Heart right ventricle (tissue), 16 donors: ENCODE measurements at regions of chr17 and their contacts with region 1.

Region 1: DNA sequence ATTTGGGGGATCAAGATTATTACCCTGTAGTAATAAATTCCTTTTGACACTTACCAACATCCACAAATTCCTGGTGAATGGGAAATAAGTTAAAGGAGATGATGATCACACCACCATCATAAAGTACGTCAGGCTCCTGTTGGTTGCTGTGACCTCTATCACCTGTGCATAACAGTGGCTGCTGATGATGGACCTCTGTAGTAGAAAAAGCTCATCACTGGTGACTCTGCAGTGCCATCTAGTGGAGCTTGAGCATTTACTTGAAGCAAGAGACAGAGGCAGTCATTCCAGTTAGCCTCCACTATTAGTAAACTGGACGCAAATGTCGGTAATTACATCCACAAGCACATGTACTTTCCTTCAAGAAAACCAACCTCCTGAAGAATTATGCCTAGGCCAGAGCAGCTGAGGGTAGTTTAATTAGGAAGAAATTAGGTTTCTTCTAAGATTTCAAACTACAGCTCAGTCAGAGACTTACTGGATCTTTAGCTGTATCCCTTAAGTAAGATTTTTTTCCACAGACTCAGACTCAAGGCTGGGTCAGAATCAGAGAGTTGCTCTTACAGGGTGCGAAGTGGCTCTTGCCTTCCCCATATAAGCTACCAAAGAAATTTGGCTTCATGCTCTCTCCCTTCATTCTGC is 39.3 kb downstream of the CYB561 start:
- DNase-seq: peak in 1 of 2 donors; percentile 85
- ATAC-seq: peak; percentile 78 to 90 (median 84)
- H3K4me3 ChIP-seq: no peak overlapping the region
- H3K27ac ChIP-seq: no peak overlapping the region
- H3K4me1 ChIP-seq: peaks cover 0 to 8% (median 0%) of the 10 kb centered on the region in 9 donors
- H3K27me3 ChIP-seq: no peaks in the 10 kb centered on the region
- CTCF ChIP-seq: peak; percentile 79 to 93 (median 88)

Region 2: DNA sequence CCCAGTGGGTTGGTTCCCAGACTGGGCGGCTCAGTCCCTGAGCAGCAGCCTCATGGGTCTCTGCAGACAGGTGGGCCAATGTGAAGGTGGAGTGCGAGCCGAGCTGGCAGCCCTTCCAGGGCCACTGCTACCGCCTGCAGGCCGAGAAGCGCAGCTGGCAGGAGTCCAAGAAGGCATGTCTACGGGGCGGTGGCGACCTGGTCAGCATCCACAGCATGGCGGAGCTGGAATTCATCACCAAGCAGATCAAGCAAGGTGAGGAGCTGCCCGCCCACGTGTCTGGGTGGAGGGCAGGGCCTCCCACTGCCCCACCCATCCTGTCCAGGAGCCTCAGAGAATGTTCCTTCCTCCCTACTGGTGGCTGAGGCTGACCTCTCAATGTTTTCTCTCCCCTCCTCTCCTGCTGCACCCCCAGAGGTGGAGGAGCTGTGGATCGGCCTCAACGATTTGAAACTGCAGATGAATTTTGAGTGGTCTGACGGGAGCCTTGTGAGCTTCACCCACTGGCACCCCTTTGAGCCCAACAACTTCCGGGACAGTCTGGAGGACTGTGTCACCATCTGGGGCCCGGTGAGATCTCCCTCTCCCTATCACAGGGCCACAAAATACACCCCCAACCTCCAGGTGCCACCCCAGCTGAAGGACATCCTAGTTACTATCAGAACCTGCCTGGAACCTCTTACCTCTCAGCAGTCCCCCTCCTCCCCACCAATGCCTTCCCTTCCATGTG is 735.1 kb before region 1 on chr17:
- intact Hi-C with region 1: loop called (anchors 2 to 10 kb)
- DNase-seq: no peak
- ATAC-seq: peak in 5 of 8 donors; percentile 11 to 31 (median 24)
- H3K4me3 ChIP-seq: no peak overlapping the region
- H3K27ac ChIP-seq: no peak overlapping the region
- H3K4me1 ChIP-seq: peaks cover 0 to 17% (median 5%) of the 10 kb centered on the region in 9 donors
- H3K27me3 ChIP-seq: no peaks in the 10 kb centered on the region
- CTCF ChIP-seq: no peak

Region 3: GRCh38 chr17:62703775-62704378 is 702.9 kb before region 1 on chr17:
- intact Hi-C with region 1: loop called (anchors 2 to 10 kb)
- DNase-seq: peak; percentile 62 to 79
- ATAC-seq: peak; percentile 84 to 92 (median 86)
- H3K4me3 ChIP-seq: peak overlapping the region; percentile 36 to 73 (median 66)
- H3K27ac ChIP-seq: peak overlapping the region; percentile 71 to 95 (median 86)
- H3K4me1 ChIP-seq: peaks cover 8 to 39% (median 26%) of the 10 kb centered on the region in 9 donors
- H3K27me3 ChIP-seq: peaks cover 0 to 25% (median 0%) of the 10 kb centered on the region in 7 donors
- CTCF ChIP-seq: peak; percentile 69 to 94 (median 89)

Region 4: GRCh38 chr17:62987137-62987536 is 419.7 kb before region 1 on chr17:
- intact Hi-C with region 1: loop called in 5 of 10 experiments (anchors 5 to 10 kb)
- DNase-seq: no peak
- ATAC-seq: no peak
- H3K4me3 ChIP-seq: no peak overlapping the region
- H3K27ac ChIP-seq: no peak overlapping the region
- H3K4me1 ChIP-seq: peaks cover 0 to 9% (median 0%) of the 10 kb centered on the region in 9 donors
- H3K27me3 ChIP-seq: no peaks in the 10 kb centered on the region
- CTCF ChIP-seq: peak in 1 of 9 donors; percentile 12

Region 5: DNA sequence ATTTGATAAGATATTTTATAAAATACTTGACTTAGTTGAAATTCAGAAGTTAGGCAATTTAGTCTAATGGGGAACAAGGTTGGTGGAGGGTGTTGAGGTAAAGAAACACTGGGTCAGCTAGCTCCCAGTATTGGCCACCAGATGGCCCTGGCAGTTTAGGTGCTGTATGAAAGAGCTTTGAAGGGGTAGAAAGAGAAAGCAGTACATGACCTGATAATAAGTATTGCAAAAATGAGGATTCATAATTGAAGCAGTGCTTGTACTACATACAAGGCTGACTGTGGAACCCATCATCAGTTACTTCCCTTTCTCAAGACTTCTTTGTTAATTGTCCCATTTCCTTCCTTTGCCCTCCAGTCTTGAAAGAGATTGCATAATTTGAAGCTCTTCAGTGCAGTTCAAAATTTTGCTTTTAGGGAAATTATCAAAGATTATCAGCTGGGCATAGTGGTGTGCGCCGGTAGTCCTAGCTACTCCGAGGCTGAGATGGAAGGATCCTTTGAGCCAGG is 411.4 kb before region 1 on chr17:
- intact Hi-C with region 1: loop called in 7 of 10 experiments (anchors 5 to 10 kb)
- DNase-seq: peak in 1 of 2 donors; percentile 8
- ATAC-seq: peak in 5 of 8 donors; percentile 14 to 69 (median 54)
- H3K4me3 ChIP-seq: no peak overlapping the region
- H3K27ac ChIP-seq: no peak overlapping the region
- H3K4me1 ChIP-seq: peaks cover 0 to 18% (median 6%) of the 10 kb centered on the region in 9 donors
- H3K27me3 ChIP-seq: no peaks in the 10 kb centered on the region
- CTCF ChIP-seq: peak in 7 of 9 donors; percentile 38 to 61 (median 55)

Region 6: GRCh38 chr17:63082273-63082993 is 324.4 kb before region 1 on chr17:
- intact Hi-C with region 1: loop called in 9 of 10 experiments (anchors 2 to 5 kb)
- DNase-seq: no peak
- ATAC-seq: no peak
- H3K4me3 ChIP-seq: no peak overlapping the region
- H3K27ac ChIP-seq: no peak overlapping the region
- H3K4me1 ChIP-seq: no peaks in the 10 kb centered on the region
- H3K27me3 ChIP-seq: no peaks in the 10 kb centered on the region
- CTCF ChIP-seq: peak; percentile 12 to 62 (median 45)